Natural killer cell (primary cell): ENCODE measurements at regions of chr10 and their contacts with region 1.

Region 1: DNA sequence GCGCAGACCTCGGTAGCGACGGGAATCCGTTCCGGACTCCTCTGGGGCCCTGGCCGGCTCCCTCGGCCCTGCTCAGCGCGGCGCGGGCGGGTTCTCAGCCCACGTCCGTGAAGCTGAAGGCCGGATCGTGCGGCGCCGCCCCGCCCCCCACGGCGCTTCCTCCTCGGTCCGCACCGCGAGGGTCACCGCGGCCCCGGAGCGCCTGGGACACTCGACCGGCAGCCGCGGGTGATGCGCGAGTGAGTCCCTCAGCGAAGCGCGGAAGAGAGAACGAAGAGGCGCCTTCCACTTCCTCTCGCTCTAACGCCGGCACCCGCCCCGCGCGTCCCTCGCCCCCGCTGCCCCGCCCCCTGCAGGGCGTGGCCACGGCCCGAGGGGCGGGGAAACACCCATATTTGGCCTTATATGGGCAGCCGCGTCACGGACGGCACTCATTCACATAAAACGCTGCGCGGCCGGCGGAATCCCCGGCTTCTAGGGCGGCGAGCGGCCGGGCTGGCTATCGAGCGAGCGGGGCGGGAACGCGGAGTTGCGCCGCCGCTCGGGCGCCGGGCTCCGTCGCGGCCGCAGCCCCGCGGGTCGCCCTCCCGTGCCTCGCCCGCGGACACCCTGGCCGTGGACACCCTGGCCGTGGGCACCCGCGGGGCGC is at the start of gene DUSP5:
- DNase-seq: peak; percentile 98 to 99
- ATAC-seq: peak; percentile 88 to 97 (median 89)
- H3K4me3 ChIP-seq: peak within 1 kb of the TSS; percentile 66
- H3K4me3 Mint-ChIP-seq: peak within 1 kb of the TSS; percentile 97
- H3K27ac ChIP-seq: peak within 1 kb of the TSS; percentile 72
- H3K27ac Mint-ChIP-seq: peak within 1 kb of the TSS; percentile 96
- H3K4me1 ChIP-seq: peaks cover 53% of the 10 kb centered on the region
- H3K4me1 Mint-ChIP-seq: peaks cover 59 to 72% of the 10 kb centered on the region in 2 donors
- H3K27me3 ChIP-seq: no peaks in the 10 kb centered on the region
- H3K27me3 Mint-ChIP-seq: no peaks in the 10 kb centered on the region
- CTCF ChIP-seq: no peak
- total RNA-seq, gene DUSP5: 56.3 to 98.9 (median 69.6) TPM

Region 2: GRCh38 chr10:110210674-110211464 is 286.7 kb before region 1 on chr10:
- intact Hi-C with region 1: loop called (anchors 5 kb)
- DNase-seq: peak; percentile 88 to 95
- ATAC-seq: peak; percentile 73 to 81 (median 78)
- H3K4me3 ChIP-seq: peak overlapping the region; percentile 57
- H3K4me3 Mint-ChIP-seq: peak overlapping the region; percentile 96
- H3K27ac ChIP-seq: peak overlapping the region; percentile 71
- H3K27ac Mint-ChIP-seq: peak overlapping the region; percentile 63 to 86
- H3K4me1 ChIP-seq: peaks cover 48% of the 10 kb centered on the region
- H3K4me1 Mint-ChIP-seq: peaks cover 54 to 61% of the 10 kb centered on the region in 2 donors
- H3K27me3 ChIP-seq: peaks cover 30% of the 10 kb centered on the region
- H3K27me3 Mint-ChIP-seq: peaks cover 58 to 75% of the 10 kb centered on the region in 2 donors
- CTCF ChIP-seq: no peak

Region 3: GRCh38 chr10:110444004-110444337 is 53.6 kb before region 1 on chr10:
- intact Hi-C with region 1: loop called (anchors 5 kb)
- DNase-seq: peak in 1 of 2 donors; percentile 4
- ATAC-seq: no peak
- H3K4me3 ChIP-seq: no peak overlapping the region
- H3K4me3 Mint-ChIP-seq: no peak overlapping the region
- H3K27ac ChIP-seq: no peak overlapping the region
- H3K27ac Mint-ChIP-seq: peak overlapping the region in 1 of 2 donors; percentile 35
- H3K4me1 ChIP-seq: peaks cover 16% of the 10 kb centered on the region
- H3K4me1 Mint-ChIP-seq: peaks cover 36 to 43% of the 10 kb centered on the region in 2 donors
- H3K27me3 ChIP-seq: no peaks in the 10 kb centered on the region
- H3K27me3 Mint-ChIP-seq: no peaks in the 10 kb centered on the region
- CTCF ChIP-seq: no peak